Tibial artery (tissue), 4 donors: ENCODE measurements at regions of chr2 and their contacts with region 1.

Region 1: DNA sequence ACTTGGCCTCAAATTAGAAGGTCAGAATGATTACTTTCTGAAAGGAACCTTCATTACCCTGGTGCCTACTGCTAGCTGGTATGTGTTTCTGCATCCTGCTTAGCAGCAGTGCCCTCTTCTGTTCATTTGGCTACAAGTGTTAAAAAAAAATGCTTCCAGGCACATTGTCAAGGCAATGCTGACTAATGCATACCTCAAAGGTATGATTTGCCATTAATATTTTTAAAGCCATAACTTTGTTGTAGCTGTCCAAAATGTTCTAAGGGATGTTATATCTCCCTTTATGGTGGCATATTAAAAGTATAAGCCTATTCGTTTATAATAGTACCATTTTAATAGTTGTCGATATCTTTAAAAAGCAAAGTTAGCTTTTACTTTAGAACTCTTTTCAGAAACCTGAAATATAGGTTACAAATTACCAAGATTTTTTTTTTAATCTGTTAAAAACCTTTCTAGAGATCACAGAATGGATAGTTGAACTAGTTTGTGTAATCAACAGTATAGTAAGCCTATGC is 52.0 kb upstream of the FAM171B start:
- DNase-seq: no peak
- H3K4me3 ChIP-seq: no peak overlapping the region
- H3K27ac ChIP-seq: no peak overlapping the region
- H3K4me1 ChIP-seq: peaks cover 0 to 4% (median 1%) of the 10 kb centered on the region in 4 donors
- H3K27me3 ChIP-seq: no peaks in the 10 kb centered on the region
- CTCF ChIP-seq: peak; percentile 66 to 67

Region 2: DNA sequence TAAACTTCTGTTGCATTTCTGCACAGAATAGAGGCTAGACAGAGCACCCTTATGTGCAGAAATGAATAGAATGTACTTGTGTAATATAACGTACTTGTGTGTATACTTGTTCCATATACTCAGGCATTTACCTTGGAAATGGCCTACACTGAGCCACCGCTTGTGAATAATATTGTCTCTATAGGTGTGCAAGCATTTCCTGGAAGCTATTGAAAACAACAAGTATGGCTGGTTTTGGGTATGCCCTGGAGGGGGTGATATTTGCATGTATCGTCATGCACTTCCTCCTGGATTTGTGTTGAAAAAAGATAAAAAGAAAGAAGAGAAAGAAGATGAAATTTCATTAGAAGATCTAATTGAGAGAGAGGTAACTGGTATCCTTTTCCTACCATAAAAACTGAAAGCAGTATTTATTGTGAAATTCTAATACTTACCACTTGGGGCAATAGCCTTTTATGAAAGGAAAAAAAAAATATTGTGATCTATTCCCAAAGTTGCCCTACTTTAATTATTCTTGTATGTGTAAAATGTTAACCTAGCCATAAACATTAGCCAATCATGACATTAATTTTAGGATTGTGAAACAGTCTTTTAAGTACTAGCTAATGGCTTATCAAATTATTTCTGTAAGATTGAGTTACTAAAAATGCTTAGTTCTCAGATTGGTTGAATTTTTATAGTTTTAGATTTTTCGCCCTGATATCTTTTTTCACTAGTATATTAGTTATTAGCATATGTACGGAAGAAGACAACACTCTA is 137.8 kb before region 1 on chr2:
- intact Hi-C with region 1: loop called (anchors 2 kb)
- DNase-seq: no peak
- H3K4me3 ChIP-seq: no peak overlapping the region
- H3K27ac ChIP-seq: no peak overlapping the region
- H3K4me1 ChIP-seq: peaks cover 0 to 3% (median 0%) of the 10 kb centered on the region in 4 donors
- H3K27me3 ChIP-seq: no peaks in the 10 kb centered on the region
- CTCF ChIP-seq: peak; percentile 63 to 66